ENCODE measurements at regions of chr10 and their contacts with region 1.

Region 1: GRCh38 chr10:86399879-86400704 is 33.5 kb upstream of the GRID1 start:
- DNase-seq: peak; percentile 85 to 97 (median 92)
- ATAC-seq: peak; percentile 85 to 88
- H3K4me3 Mint-ChIP-seq: peak overlapping the region; percentile 84 to 94 (median 90)
- H3K27ac Mint-ChIP-seq: peak overlapping the region; percentile 89 to 96 (median 93)
- H3K4me1 Mint-ChIP-seq: peaks cover 10 to 25% (median 21%) of the 10 kb centered on the region in 4 donors
- H3K27me3 Mint-ChIP-seq: peaks cover 0 to 4% (median 0%) of the 10 kb centered on the region in 5 donors

Region 2: GRCh38 chr10:86411281-86411841 is 11.3 kb after region 1 on chr10:
- POLR2A ChIA-PET with region 1: interaction called, 110 read pairs
- DNase-seq: peak in 2 of 10 donors; percentile 15 to 41
- ATAC-seq: peak; percentile 64 to 67
- H3K4me3 Mint-ChIP-seq: peak overlapping the region; percentile 70 to 84 (median 74)
- H3K27ac Mint-ChIP-seq: peak overlapping the region; percentile 57 to 94 (median 88)
- H3K4me1 Mint-ChIP-seq: peaks cover 21 to 59% (median 48%) of the 10 kb centered on the region in 4 donors
- H3K27me3 Mint-ChIP-seq: no peaks in the 10 kb centered on the region

Region 3: GRCh38 chr10:86419101-86419500 is 19.0 kb after region 1 on chr10:
- POLR2A ChIA-PET with region 1: interaction called, 110 read pairs
- DNase-seq: peak in 1 of 10 donors; percentile 16
- ATAC-seq: peak; percentile 23 to 78
- H3K4me3 Mint-ChIP-seq: peak overlapping the region in 1 of 10 donors; percentile 20
- H3K27ac Mint-ChIP-seq: peak overlapping the region in 5 of 10 donors; percentile 28 to 91 (median 77)
- H3K4me1 Mint-ChIP-seq: peaks cover 14 to 27% (median 24%) of the 10 kb centered on the region in 4 donors
- H3K27me3 Mint-ChIP-seq: peaks cover 0 to 5% (median 0%) of the 10 kb centered on the region in 5 donors

Region 4: GRCh38 chr10:86521678-86522509 is 121.8 kb after region 1 on chr10 and contains the start of gene WAPL:
- POLR2A ChIA-PET with region 1: interaction called, 24 read pairs
- DNase-seq: peak; percentile 90 to 97 (median 94)
- ATAC-seq: peak; percentile 94
- H3K4me3 Mint-ChIP-seq: peak within 1 kb of the TSS; percentile 90 to 97 (median 96)
- H3K27ac Mint-ChIP-seq: peak within 1 kb of the TSS; percentile 86 to 98 (median 95)
- H3K4me1 Mint-ChIP-seq: peaks cover 23 to 74% (median 62%) of the 10 kb centered on the region in 4 donors
- H3K27me3 Mint-ChIP-seq: no peaks in the 10 kb centered on the region
- polyA plus RNA-seq, gene WAPL: 37.0 to 42.1 (median 38.6) TPM

Region 5: DNA sequence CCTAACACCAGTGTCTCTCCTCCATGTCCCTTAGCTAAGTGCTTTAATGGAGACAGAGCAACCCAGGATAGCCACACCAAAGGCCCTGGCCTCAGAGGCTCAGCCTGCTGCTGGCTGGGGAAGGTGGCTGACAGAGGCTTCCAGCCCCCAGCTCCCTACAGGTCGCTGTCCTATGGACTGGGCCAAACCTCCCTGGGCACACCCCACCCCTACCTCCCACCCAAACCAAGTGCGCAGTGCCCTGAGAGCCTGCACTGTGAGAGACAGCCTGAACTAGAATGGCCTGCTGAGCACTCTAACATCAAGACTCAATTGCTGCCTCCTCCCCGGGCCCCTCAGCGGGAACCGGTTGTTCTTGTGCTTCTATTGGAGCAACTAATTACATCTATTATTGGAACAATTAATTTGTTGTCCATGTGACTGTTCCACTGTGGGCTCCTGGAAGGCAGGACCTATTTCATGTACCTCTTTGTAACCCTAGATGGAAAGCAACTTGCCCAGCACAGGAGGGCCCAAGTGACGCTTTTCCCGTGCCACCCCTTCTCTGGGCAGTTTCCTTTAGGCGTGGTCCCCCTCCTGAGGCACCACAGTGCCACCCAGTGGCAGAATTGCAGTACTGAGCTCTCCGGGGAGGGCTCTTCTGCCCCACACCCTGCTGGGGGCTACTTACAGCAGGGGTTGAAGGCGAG is 185.1 kb after region 1 on chr10:
- POLR2A ChIA-PET with region 1: interaction called, 27 read pairs
- DNase-seq: peak; percentile 52 to 84 (median 73)
- ATAC-seq: peak; percentile 94 to 99
- H3K4me3 Mint-ChIP-seq: no peak overlapping the region
- H3K27ac Mint-ChIP-seq: no peak overlapping the region
- H3K4me1 Mint-ChIP-seq: peaks cover 0 to 4% (median 1%) of the 10 kb centered on the region in 4 donors
- H3K27me3 Mint-ChIP-seq: no peaks in the 10 kb centered on the region

Measured in naive thymus-derived CD8-positive, alpha-beta T cell (primary cell).